Dendritic cell treated with granulocyte-macrophage colony-stimulating factor and Interleukin-4, amounts not matched to agents 40 ng/mL and 50 ng/mL, for 4 days (primary cell): ENCODE measurements at regions of chr2 and their contacts with region 1.

Region 1: DNA sequence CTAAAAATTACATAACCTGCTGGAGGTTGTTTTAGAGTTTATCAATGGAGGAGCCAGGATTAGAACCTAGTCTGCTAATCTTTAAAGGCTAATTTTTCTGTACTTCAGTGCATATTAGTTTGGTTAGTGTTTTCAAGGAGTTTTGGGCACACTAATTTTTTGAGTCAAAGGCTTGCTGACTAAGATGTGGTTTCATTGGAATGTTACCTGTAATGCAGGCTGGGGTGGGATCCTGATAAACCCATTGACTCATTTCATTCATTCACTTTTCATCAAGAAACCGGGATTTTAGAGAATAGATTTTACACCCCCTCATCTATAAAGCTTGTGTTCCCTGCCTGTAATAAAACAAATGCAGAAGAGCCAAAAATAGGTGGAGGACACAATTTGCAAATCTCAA is 91.9 kb upstream of the IL1R2 start:
- H3K4me3 Mint-ChIP-seq: no peak overlapping the region
- H3K27ac Mint-ChIP-seq: no peak overlapping the region
- H3K4me1 Mint-ChIP-seq: peaks cover 25% of the 10 kb centered on the region
- H3K27me3 Mint-ChIP-seq: no peaks in the 10 kb centered on the region

Region 2: GRCh38 chr2:101486258-101486701 is 413.6 kb before region 1 on chr2:
- intact Hi-C with region 1: no loop called
- H3K4me3 Mint-ChIP-seq: no peak overlapping the region
- H3K27ac Mint-ChIP-seq: no peak overlapping the region
- H3K4me1 Mint-ChIP-seq: no peaks in the 10 kb centered on the region
- H3K27me3 Mint-ChIP-seq: peaks cover 35% of the 10 kb centered on the region

Region 3: GRCh38 chr2:101942851-101943250 is 43.0 kb after region 1 on chr2:
- intact Hi-C with region 1: loop called (anchors 5 kb)
- H3K4me3 Mint-ChIP-seq: no peak overlapping the region
- H3K27ac Mint-ChIP-seq: peak overlapping the region; percentile 41
- H3K4me1 Mint-ChIP-seq: peaks cover 45% of the 10 kb centered on the region
- H3K27me3 Mint-ChIP-seq: no peaks in the 10 kb centered on the region